GM12878 (cell line): ENCODE measurements at regions of chr3 and their contacts with region 1.

Region 1: DNA sequence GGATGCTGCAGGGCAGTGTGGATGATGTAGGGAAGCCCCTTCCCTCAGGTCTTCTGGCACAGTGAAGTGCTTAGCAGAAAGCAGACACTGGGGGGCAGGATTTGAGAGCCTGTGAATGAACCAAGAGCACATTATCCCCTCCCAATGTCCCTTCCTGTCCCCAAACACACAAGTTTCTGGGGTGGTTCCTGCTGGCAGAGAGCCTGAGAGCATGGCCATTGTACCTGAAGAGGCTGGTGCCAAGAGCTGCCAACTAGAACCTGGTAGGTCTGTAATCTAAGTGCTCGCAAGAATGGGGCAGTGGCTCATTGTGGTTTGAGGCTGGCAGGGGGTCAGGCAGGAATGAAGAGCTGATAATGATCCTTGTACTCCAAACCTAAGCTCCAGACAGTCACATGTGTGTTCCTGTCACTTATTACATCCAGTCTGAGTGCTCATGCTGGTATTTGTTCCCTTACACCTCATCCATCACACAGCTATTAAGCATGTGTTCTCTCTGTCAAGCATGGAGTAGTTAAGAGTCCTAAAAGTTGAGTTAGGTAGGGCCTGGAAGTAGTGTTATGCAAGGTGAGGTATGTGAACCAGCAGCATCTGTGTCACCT is 6.7 kb upstream of the CCR1 start:
- DNase-seq: no peak
- ATAC-seq: peak; percentile 85
- H3K4me3 ChIP-seq: no peak overlapping the region
- H3K27ac ChIP-seq: no peak overlapping the region
- H3K4me1 ChIP-seq: peaks cover 31% of the 10 kb centered on the region
- H3K27me3 ChIP-seq: peaks cover 0 to 5% of the 10 kb centered on the region in 2 experiments; a peak in 1 of 4 replicates
- CTCF ChIP-seq: peak; percentile 44 to 64 (median 61); a peak in 5 of 6 replicates
- EP300 ChIP-seq: no peak
- POLR2A ChIP-seq: no peak
- RAD21 ChIP-seq: peak; percentile 69

Region 2: DNA sequence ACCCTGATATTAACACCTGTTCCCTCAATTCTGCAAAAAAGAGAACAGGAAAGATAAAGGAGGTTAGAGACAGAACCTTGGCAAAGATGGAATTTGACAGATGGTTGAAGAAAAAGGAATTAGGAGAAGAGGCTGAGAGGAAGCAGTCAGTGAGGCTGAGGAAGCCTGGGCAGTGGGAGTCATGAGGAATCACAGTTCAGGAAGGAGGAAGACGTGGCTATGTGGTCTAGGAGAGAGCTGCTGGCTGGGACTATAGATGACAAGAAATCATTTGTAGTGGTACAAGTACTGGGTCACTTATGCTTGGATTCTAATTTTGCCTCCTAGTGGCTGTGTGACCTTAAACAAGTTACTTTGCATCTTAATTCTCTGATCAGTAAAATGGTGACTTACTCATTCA is 777.5 kb before region 1 on chr3:
- CTCF ChIA-PET with region 1: no interaction called
- POLR2A ChIA-PET with region 1: no interaction called
- RAD21 ChIA-PET with region 1: no interaction called
- SMC1A ChIA-PET with region 1: no interaction called
- in situ Hi-C with region 1: no loop called
- intact Hi-C with region 1: no loop called
- DNase-seq: no peak
- ATAC-seq: no peak
- H3K4me3 ChIP-seq: no peak overlapping the region
- H3K27ac ChIP-seq: no peak overlapping the region
- H3K4me1 ChIP-seq: no peaks in the 10 kb centered on the region
- H3K27me3 ChIP-seq: no peaks in the 10 kb centered on the region
- CTCF ChIP-seq: no peak
- EP300 ChIP-seq: no peak
- POLR2A ChIP-seq: no peak
- RAD21 ChIP-seq: no peak

Region 3: GRCh38 chr3:45793482-45794176 is 421.2 kb before region 1 on chr3:
- CTCF ChIA-PET with region 1: no interaction called
- POLR2A ChIA-PET with region 1: no interaction called
- RAD21 ChIA-PET with region 1: no interaction called
- SMC1A ChIA-PET with region 1: no interaction called
- in situ Hi-C with region 1: no loop called
- intact Hi-C with region 1: no loop called
- DNase-seq: no peak
- ATAC-seq: no peak
- H3K4me3 ChIP-seq: no peak overlapping the region
- H3K27ac ChIP-seq: no peak overlapping the region
- H3K4me1 ChIP-seq: peaks cover 5% of the 10 kb centered on the region
- H3K27me3 ChIP-seq: peaks cover 2 to 17% of the 10 kb centered on the region in 2 experiments; a peak in 3 of 4 replicates
- CTCF ChIP-seq: no peak
- EP300 ChIP-seq: no peak
- POLR2A ChIP-seq: no peak
- RAD21 ChIP-seq: no peak

Region 4: DNA sequence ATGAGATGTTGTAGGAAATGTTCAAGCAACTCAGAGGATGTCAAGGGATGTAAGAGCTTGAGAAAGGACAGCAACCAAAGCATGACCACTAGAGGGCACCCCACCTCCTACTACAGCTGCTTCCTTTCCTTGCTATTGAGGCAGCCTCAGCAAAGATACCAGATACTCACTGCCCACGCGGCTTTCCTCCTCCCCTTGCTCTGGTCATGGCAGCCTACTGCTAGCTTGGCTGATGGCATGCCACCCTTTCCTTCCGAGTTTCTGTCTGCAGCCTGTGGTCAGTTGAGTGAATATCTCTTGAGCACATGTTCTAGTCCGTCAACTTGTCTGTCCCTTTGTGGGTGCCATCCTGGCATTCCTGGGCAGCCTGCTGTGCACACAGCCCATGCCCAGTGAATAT is 276.0 kb before region 1 on chr3:
- CTCF ChIA-PET with region 1: interaction called, 25 read pairs
- POLR2A ChIA-PET with region 1: no interaction called
- RAD21 ChIA-PET with region 1: interaction called, 4 read pairs
- SMC1A ChIA-PET with region 1: interaction called, 3 read pairs
- in situ Hi-C with region 1: loop called (anchors 10 kb)
- intact Hi-C with region 1: no loop called
- DNase-seq: peak; percentile 66
- ATAC-seq: peak; percentile 97
- H3K4me3 ChIP-seq: no peak overlapping the region
- H3K27ac ChIP-seq: no peak overlapping the region
- H3K4me1 ChIP-seq: peaks cover 7% of the 10 kb centered on the region
- H3K27me3 ChIP-seq: no peaks in the 10 kb centered on the region
- CTCF ChIP-seq: peak; percentile 88 to 94 (median 91); a peak in 5 of 6 replicates
- EP300 ChIP-seq: no peak
- POLR2A ChIP-seq: no peak
- RAD21 ChIP-seq: peak; percentile 94

Region 5: DNA sequence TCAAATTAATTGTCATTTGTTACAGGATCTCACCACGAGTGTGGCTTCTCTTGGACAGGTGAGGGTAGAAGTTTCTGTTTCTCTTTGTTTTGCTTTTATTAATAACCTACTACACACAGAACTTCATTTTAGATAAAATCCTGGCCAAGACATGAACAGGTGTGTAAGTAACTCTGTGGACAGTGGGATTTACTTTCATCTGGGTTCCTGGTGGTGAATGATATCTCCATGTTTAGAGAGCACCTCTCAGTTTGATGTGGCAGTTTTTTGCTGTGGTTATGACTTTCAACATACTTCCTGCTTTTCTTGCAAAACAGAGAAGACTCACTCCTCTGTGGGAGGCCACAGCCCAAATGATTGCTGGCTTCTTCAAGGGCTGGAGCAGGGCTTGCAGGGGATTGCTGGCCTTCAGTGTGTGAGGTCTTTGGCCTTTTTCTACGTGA is 116.5 kb before region 1 on chr3:
- CTCF ChIA-PET with region 1: interaction called, 396 read pairs
- POLR2A ChIA-PET with region 1: interaction called, 18 read pairs
- RAD21 ChIA-PET with region 1: interaction called, 268 read pairs
- SMC1A ChIA-PET with region 1: interaction called, 342 read pairs
- in situ Hi-C with region 1: no loop called
- intact Hi-C with region 1: no loop called
- DNase-seq: peak; percentile 86
- ATAC-seq: peak; percentile 78
- H3K4me3 ChIP-seq: 0 out of 2 replicates have a peak overlapping the region, but pooled peaks have one; percentile 29
- H3K27ac ChIP-seq: peak overlapping the region; percentile 94
- H3K4me1 ChIP-seq: peaks cover 60% of the 10 kb centered on the region
- H3K27me3 ChIP-seq: no peaks in the 10 kb centered on the region
- CTCF ChIP-seq: no peak
- EP300 ChIP-seq: peak; percentile 64 to 81; a peak in 3 of 4 replicates
- POLR2A ChIP-seq: peak; percentile 53; the same call in 1 of the 2 replicates
- RAD21 ChIP-seq: no peak

Region 6: GRCh38 chr3:46228259-46229242 is 13.7 kb after region 1 on chr3:
- CTCF ChIA-PET with region 1: interaction called, 26 read pairs
- POLR2A ChIA-PET with region 1: no interaction called
- RAD21 ChIA-PET with region 1: no interaction called
- SMC1A ChIA-PET with region 1: interaction called, 28 read pairs
- in situ Hi-C with region 1: no loop called
- intact Hi-C with region 1: no loop called
- DNase-seq: no peak
- ATAC-seq: no peak
- H3K4me3 ChIP-seq: no peak overlapping the region
- H3K27ac ChIP-seq: no peak overlapping the region
- H3K4me1 ChIP-seq: peaks cover 3% of the 10 kb centered on the region
- H3K27me3 ChIP-seq: peaks cover 0 to 3% of the 10 kb centered on the region in 2 experiments; a peak in 2 of 4 replicates
- CTCF ChIP-seq: no peak; a peak in 1 of 6 replicates
- EP300 ChIP-seq: no peak
- POLR2A ChIP-seq: no peak
- RAD21 ChIP-seq: peak; percentile 30; the same call in 1 of the 2 replicates

Region 7: GRCh38 chr3:46276502-46277099 is 61.7 kb after region 1 on chr3:
- CTCF ChIA-PET with region 1: interaction called, 21 read pairs
- POLR2A ChIA-PET with region 1: no interaction called
- RAD21 ChIA-PET with region 1: interaction called, 3 read pairs
- SMC1A ChIA-PET with region 1: interaction called, 9 read pairs
- in situ Hi-C with region 1: no loop called
- intact Hi-C with region 1: no loop called
- DNase-seq: no peak
- ATAC-seq: peak; percentile 90
- H3K4me3 ChIP-seq: no peak overlapping the region
- H3K27ac ChIP-seq: no peak overlapping the region
- H3K4me1 ChIP-seq: peaks cover 27% of the 10 kb centered on the region
- H3K27me3 ChIP-seq: 0 out of 4 replicates have a peak, but pooled peaks cover 0 to 2% of the 10 kb centered on the region in 2 experiments
- CTCF ChIP-seq: peak; percentile 67 to 87 (median 85)
- EP300 ChIP-seq: no peak
- POLR2A ChIP-seq: no peak
- RAD21 ChIP-seq: peak; percentile 83

Region 8: DNA sequence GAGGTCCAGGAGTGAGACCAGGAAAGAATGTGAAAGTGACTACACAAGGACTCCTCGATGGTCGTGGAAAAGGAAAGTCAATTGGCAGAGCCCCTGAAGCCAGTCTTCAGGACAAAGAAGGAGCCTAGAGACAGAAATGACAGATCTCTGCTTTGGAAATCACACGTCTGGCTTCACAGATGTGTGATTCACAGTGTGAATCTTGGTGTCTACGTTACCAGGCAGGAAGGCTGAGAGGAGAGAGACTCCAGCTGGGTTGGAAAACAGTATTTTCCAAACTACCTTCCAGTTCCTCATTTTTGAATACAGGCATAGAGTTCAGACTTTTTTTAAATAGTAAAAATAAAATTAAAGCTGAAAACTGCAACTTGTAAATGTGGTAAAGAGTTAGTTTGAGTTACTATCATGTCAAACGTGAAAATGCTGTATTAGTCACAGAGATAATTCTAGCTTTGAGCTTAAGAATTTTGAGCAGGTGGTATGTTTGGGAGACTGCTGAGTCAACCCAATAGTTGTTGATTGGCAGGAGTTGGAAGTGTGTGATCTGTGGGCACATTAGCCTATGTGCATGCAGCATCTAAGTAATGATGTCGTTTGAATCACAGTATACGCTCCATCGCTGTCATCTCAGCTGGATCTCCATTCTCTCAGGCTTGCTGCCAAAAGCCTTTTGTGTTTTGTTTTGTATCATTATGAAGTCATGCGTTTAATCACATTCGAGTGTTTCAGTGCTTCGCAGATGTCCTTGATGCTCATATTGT is 145.1 kb after region 1 on chr3:
- CTCF ChIA-PET with region 1: interaction called, 555 read pairs
- POLR2A ChIA-PET with region 1: interaction called, 4 read pairs
- RAD21 ChIA-PET with region 1: interaction called, 31 read pairs
- SMC1A ChIA-PET with region 1: interaction called, 13 read pairs
- in situ Hi-C with region 1: no loop called
- intact Hi-C with region 1: no loop called
- DNase-seq: peak; percentile 68
- ATAC-seq: peak; percentile 91
- H3K4me3 ChIP-seq: no peak overlapping the region
- H3K27ac ChIP-seq: peak overlapping the region; percentile 45
- H3K4me1 ChIP-seq: peaks cover 40% of the 10 kb centered on the region
- H3K27me3 ChIP-seq: no peaks in the 10 kb centered on the region
- CTCF ChIP-seq: no peak
- EP300 ChIP-seq: peak; percentile 25 to 42; a peak in 1 of 4 replicates
- POLR2A ChIP-seq: no peak
- RAD21 ChIP-seq: no peak